ENCODE measurements at regions of chr1 and their contacts with region 1.

Region 1: DNA sequence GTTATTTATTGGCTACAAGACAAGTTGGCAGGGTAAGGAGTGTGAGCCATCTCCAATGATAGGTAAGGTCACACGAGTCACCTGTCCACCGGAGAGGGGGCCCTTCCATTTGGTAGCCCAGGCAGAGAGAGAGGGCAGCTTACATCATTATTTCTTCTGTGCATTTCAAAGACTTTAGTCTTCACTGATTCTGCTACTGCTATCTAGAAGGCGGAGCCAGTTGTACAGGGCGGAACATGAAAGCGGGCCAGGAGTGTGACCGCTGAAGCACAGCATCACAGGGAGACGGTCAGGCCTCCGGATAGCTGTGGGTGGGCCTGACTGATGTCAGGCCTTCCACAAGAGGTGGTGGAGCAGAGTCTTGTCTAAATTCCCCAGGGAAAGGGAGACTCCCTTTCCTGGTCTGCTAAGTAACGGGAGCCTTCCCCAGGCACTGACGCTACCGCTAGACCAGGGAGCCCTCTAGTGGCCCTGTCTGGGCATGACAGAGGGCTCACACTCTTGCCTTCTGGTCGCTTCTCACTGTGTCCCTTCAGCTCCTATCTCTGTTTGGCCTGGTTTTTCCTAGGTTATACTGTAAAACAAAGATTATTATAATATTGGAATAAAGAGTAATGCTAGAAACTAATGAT is 36.7 kb downstream of the ZNF695 start:
- DNase-seq: peak; percentile 36 to 50 (median 49)
- H3K4me3 ChIP-seq: no peak overlapping the region
- H3K4me3 Mint-ChIP-seq: peak overlapping the region; percentile 42 to 74
- H3K27ac ChIP-seq: no peak overlapping the region
- H3K27ac Mint-ChIP-seq: peak overlapping the region in 3 of 7 donors; percentile 6 to 67 (median 8)
- H3K4me1 ChIP-seq: no peaks in the 10 kb centered on the region
- H3K4me1 Mint-ChIP-seq: peaks cover 7% of the 10 kb centered on the region
- H3K27me3 ChIP-seq: no peaks in the 10 kb centered on the region
- H3K27me3 Mint-ChIP-seq: peaks cover 0 to 2% (median 0%) of the 10 kb centered on the region in 3 donors
- CTCF ChIP-seq: peak; percentile 86

Region 2: GRCh38 chr1:246897302-246897701 is 73.9 kb before region 1 on chr1:
- intact Hi-C with region 1: no loop called
- DNase-seq: no peak
- H3K4me3 ChIP-seq: no peak overlapping the region
- H3K4me3 Mint-ChIP-seq: no peak overlapping the region
- H3K27ac ChIP-seq: no peak overlapping the region
- H3K27ac Mint-ChIP-seq: no peak overlapping the region
- H3K4me1 ChIP-seq: no peaks in the 10 kb centered on the region
- H3K4me1 Mint-ChIP-seq: no peaks in the 10 kb centered on the region
- H3K27me3 ChIP-seq: no peaks in the 10 kb centered on the region
- H3K27me3 Mint-ChIP-seq: no peaks in the 10 kb centered on the region
- CTCF ChIP-seq: no peak

Region 3: DNA sequence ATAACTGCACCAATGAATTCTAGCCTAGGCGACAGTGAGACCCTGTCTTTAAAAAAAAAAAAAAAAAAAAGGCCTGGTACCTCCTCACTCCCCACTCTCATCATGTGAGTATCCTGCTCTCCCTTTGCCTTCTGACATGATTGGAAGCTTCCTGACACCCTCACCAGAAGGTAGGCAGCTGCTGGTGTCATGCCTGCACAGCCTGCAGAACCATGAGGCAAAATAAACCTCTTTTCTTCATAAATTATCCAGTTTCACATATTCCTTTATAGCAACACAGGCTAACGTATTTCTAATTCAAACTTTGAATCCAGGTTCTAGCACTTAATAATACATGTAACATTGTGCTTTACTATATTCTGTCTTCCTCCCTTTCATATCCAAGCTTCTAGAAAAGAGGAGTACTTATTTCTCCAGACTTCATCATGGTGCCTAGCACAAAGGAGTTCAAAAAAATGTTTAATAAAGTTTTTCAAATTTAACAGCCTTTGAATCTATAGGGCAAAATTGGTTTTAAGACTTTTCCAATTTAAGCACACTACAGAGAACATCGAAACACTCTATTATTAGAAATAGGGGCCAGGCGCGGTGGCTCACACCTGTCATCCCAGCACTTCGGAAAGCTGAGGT is 45.1 kb before region 1 on chr1:
- intact Hi-C with region 1: loop called (anchors 5 kb)
- DNase-seq: no peak
- H3K4me3 ChIP-seq: no peak overlapping the region
- H3K4me3 Mint-ChIP-seq: no peak overlapping the region
- H3K27ac ChIP-seq: no peak overlapping the region
- H3K27ac Mint-ChIP-seq: peak overlapping the region in 1 of 7 donors; percentile 79
- H3K4me1 ChIP-seq: peaks cover 11 to 16% of the 10 kb centered on the region in 2 donors
- H3K4me1 Mint-ChIP-seq: peaks cover 36% of the 10 kb centered on the region
- H3K27me3 ChIP-seq: no peaks in the 10 kb centered on the region
- H3K27me3 Mint-ChIP-seq: peaks cover 0 to 3% (median 0%) of the 10 kb centered on the region in 3 donors
- CTCF ChIP-seq: no peak

Measured in CD14-positive monocyte (primary cell).